H1 (cell line): ENCODE measurements at regions of chr7 and their contacts with region 1.

Region 1: GRCh38 chr7:151244196-151244840 is 4.2 kb downstream of the SMARCD3 start:
- DNase-seq: peak in 1 of 2 experiments; percentile 84
- H3K4me3 ChIP-seq: peak overlapping the region in 1 of 4 experiments; percentile 61; a peak in 4 of 8 replicates
- H3K27ac ChIP-seq: no peak overlapping the region
- H3K4me1 ChIP-seq: peaks cover 0 to 43% (median 29%) of the 10 kb centered on the region in 4 experiments; a peak in 6 of 7 replicates
- H3K27me3 ChIP-seq: peaks cover 16 to 46% (median 39%) of the 10 kb centered on the region in 4 experiments
- CTCF ChIP-seq: peak in 2 of 3 experiments; percentile 80 to 85; a peak in 3 of 4 replicates
- EP300 ChIP-seq: no peak
- POLR2A ChIP-seq: no peak
- RAD21 ChIP-seq: peak; percentile 63 to 79

Region 2: GRCh38 chr7:150992833-150993302 is 251.4 kb before region 1 on chr7:
- CTCF ChIA-PET with region 1: no interaction called
- POLR2A ChIA-PET with region 1: no interaction called
- DNase-seq: peak in 1 of 2 experiments; percentile 78
- H3K4me3 ChIP-seq: no peak overlapping the region
- H3K27ac ChIP-seq: no peak overlapping the region
- H3K4me1 ChIP-seq: peaks cover 4 to 26% (median 20%) of the 10 kb centered on the region in 4 experiments
- H3K27me3 ChIP-seq: no peaks in the 10 kb centered on the region
- CTCF ChIP-seq: no peak
- EP300 ChIP-seq: no peak
- POLR2A ChIP-seq: no peak
- RAD21 ChIP-seq: no peak

Region 3: GRCh38 chr7:151123822-151124464 is 120.4 kb before region 1 on chr7:
- CTCF ChIA-PET with region 1: interaction called, 43 read pairs
- POLR2A ChIA-PET with region 1: no interaction called
- DNase-seq: peak in 1 of 2 experiments; percentile 94
- H3K4me3 ChIP-seq: no peak overlapping the region
- H3K27ac ChIP-seq: no peak overlapping the region
- H3K4me1 ChIP-seq: peaks cover 0 to 23% (median 7%) of the 10 kb centered on the region in 4 experiments; a peak in 6 of 7 replicates
- H3K27me3 ChIP-seq: peaks cover 0 to 13% (median 4%) of the 10 kb centered on the region in 4 experiments; a peak in 5 of 7 replicates
- CTCF ChIP-seq: peak in 2 of 3 experiments; percentile 99 to 100; a peak in 3 of 4 replicates
- EP300 ChIP-seq: no peak
- POLR2A ChIP-seq: no peak
- RAD21 ChIP-seq: peak; percentile 96 to 98

Region 4: GRCh38 chr7:151206914-151207313 is 37.4 kb before region 1 on chr7:
- CTCF ChIA-PET with region 1: interaction called, 15 read pairs
- POLR2A ChIA-PET with region 1: no interaction called
- DNase-seq: no peak
- H3K4me3 ChIP-seq: no peak overlapping the region
- H3K27ac ChIP-seq: no peak overlapping the region
- H3K4me1 ChIP-seq: peaks cover 0 to 6% (median 3%) of the 10 kb centered on the region in 4 experiments; a peak in 4 of 7 replicates
- H3K27me3 ChIP-seq: peaks cover 0 to 3% (median 0%) of the 10 kb centered on the region in 4 experiments; a peak in 2 of 7 replicates
- CTCF ChIP-seq: no peak
- EP300 ChIP-seq: no peak
- POLR2A ChIP-seq: no peak
- RAD21 ChIP-seq: no peak

Region 5: DNA sequence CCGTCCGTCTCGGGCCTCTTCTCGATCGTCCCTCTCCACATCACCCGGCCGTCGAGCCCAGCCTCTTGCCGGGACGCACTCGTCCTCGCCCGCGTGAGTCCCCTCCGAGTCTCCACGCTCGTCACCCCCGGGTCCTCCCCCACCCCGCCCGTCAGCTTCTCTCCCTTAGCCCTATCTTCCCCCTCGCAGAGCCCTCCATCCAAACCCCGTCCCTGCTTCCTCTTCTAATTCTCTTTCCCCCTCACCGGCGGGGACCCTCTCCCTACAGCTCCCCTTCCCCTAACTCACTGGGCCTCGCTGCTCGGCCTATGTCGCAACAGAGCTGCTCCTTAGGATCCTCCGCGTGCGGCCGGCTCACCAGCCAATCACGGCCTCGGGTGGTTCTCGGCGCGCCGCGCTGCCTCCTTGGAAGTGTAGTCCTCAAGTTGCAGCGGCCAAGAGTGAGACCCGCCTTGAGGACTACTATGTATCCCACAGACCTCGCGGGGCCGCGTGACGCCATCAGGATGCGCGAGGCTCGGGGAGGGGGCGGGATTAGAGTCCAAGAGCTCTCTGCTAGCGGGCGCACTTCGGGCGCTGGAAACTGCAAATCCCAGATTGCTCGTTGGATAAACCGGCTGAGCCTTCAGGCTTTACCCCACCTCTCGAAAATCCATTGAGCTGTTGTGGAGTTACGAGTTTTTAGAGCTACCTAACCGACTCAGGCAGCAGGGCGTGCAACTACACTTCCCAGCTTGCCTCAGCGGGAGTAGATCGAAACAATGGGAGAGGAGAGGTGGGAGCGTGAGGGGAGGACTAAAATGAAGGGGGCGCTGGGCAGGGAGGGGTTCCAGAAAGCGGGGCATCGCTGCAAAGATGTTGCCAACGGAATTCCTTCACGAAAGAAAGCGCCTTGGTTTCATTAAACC is 17.2 kb before region 1 on chr7 and contains the start of gene ABCF2:
- CTCF ChIA-PET with region 1: interaction called, 71 read pairs
- POLR2A ChIA-PET with region 1: interaction called, 16 read pairs
- DNase-seq: peak; percentile 95 to 99
- H3K4me3 ChIP-seq: peak within 1 kb of the TSS; percentile 83 to 95 (median 90)
- H3K27ac ChIP-seq: peak within 1 kb of the TSS; percentile 56; the same call in 1 of the 2 replicates
- H3K4me1 ChIP-seq: peaks cover 2 to 9% (median 7%) of the 10 kb centered on the region in 4 experiments; a peak in 5 of 7 replicates
- H3K27me3 ChIP-seq: no peaks in the 10 kb centered on the region
- CTCF ChIP-seq: no peak
- EP300 ChIP-seq: no peak
- POLR2A ChIP-seq: peak; percentile 56 to 76; a peak in 2 of 3 replicates
- RAD21 ChIP-seq: no peak
- total RNA-seq, gene ABCF2: 51.0 and 55.0 TPM in 2 replicates

Region 6: DNA sequence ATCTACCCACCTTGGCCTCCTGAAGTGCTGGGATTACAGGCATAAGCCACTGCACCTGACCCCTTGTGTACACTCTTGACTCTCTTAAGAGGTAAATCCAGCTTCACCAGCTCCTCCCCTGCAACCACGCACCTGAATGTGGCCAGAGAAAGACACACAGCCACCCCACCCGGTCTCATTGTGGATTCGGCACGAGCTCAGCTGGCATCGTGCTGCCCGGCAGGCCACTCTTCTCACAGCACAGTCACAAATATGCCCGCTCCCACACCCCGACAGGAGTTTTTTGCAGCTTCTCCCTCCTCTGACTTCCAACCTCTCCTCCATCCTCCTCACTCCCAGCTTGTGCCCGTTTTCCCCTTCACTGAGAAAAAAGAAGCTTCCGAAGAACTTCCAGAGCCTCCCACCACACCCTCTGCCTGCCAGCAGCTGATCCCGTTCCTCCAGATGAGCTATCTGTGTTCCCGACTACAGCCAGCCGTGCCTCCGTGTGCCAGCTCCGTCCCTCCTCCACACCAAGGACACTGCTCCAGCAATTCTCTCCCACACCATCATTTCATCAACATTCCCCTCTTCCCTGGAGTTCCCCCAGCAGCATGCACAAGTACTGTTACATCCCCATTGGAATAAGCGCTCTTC is 12.2 kb after region 1 on chr7:
- CTCF ChIA-PET with region 1: interaction called, 25 read pairs
- POLR2A ChIA-PET with region 1: interaction called, 22 read pairs
- DNase-seq: no peak
- H3K4me3 ChIP-seq: no peak overlapping the region
- H3K27ac ChIP-seq: no peak overlapping the region
- H3K4me1 ChIP-seq: peaks cover 0 to 15% (median 10%) of the 10 kb centered on the region in 4 experiments; a peak in 6 of 7 replicates
- H3K27me3 ChIP-seq: peaks cover 0 to 14% (median 8%) of the 10 kb centered on the region in 4 experiments; a peak in 4 of 7 replicates
- CTCF ChIP-seq: no peak
- EP300 ChIP-seq: no peak
- POLR2A ChIP-seq: no peak
- RAD21 ChIP-seq: no peak

Region 7: DNA sequence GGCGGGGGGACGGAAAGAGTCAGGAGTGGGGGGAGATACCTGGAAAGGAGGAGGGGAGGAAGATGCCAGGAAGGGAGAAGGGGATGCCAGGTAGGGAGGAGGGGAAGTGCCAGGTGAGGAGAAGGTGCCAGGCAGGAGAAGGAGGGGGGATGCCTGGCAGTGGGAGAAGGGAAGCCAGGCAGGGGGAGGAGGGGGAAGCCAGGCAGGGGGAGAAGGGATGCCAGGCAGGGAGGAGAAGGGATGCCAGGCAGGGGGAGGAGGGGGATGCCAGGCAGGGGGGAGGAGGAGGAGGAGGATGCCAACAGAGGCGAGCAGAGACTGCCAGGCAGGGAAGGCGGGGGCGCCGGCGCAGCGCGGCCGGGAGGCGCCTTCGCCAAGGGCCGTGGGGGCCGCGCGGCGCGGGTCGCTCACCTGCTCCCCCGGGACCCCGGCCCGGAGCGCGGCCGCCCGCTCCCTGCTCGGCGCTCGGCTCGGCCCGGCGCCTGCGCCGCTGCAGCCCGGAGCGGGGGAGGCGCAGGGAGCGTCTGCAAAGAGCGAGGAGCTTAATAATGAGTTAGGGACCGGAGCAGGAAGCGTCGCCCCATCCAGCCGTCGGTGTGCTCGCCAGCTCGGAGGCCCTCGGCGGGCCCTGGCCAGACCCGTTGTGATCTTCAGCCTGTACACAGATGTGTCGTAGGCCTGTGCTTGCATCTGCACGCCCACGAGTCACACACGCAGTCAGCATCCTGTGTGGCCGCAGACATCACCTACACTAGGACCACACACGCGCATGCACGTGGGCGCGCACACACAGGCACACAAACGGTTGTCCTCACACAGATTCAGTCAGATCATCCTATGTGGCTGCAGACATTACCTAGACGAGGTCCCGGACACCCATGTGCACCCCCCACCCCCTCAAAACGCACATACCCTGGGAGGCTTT is 32.6 kb after region 1 on chr7:
- CTCF ChIA-PET with region 1: interaction called, 18 read pairs
- POLR2A ChIA-PET with region 1: interaction called, 3 read pairs
- DNase-seq: peak; percentile 23 to 74
- H3K4me3 ChIP-seq: peak overlapping the region; percentile 23 to 63 (median 42); a peak in 7 of 8 replicates
- H3K27ac ChIP-seq: no peak overlapping the region
- H3K4me1 ChIP-seq: peaks cover 0 to 15% (median 10%) of the 10 kb centered on the region in 4 experiments; a peak in 6 of 7 replicates
- H3K27me3 ChIP-seq: peaks cover 0 to 25% (median 19%) of the 10 kb centered on the region in 4 experiments; a peak in 6 of 7 replicates
- CTCF ChIP-seq: no peak
- EP300 ChIP-seq: no peak
- POLR2A ChIP-seq: no peak
- RAD21 ChIP-seq: no peak

Region 8: DNA sequence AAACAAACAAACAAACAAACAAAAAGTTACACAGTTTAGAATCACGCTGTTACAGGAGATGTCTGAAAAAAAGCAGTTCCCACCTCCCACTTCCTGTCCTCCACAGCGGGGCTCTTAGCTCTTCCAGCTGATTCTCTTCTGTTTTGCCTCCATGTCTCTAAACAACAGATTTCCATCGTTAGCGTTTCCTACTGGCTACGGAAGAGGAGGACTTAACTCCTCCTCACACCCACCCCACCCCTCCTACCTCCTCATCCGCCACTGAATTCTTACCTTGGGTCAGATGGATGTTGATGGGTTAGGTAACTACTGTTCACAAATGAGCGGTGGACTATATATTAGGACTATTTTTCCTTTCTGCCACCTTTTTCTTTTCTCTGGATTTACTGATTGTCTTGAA is 60.5 kb after region 1 on chr7:
- CTCF ChIA-PET with region 1: interaction called, 25 read pairs
- POLR2A ChIA-PET with region 1: interaction called, 6 read pairs
- DNase-seq: peak; percentile 15 to 43
- H3K4me3 ChIP-seq: peak overlapping the region; percentile 43 to 55 (median 50); a peak in 7 of 8 replicates
- H3K27ac ChIP-seq: no peak overlapping the region
- H3K4me1 ChIP-seq: peaks cover 0 to 3% (median 2%) of the 10 kb centered on the region in 4 experiments; a peak in 4 of 7 replicates
- H3K27me3 ChIP-seq: peaks cover 0 to 6% (median 2%) of the 10 kb centered on the region in 4 experiments; a peak in 4 of 7 replicates
- CTCF ChIP-seq: no peak
- EP300 ChIP-seq: no peak
- POLR2A ChIP-seq: 0 out of 3 replicates have a peak, but pooled peaks of 1 of the 2 experiments have one; percentile 36
- RAD21 ChIP-seq: no peak

Region 9: DNA sequence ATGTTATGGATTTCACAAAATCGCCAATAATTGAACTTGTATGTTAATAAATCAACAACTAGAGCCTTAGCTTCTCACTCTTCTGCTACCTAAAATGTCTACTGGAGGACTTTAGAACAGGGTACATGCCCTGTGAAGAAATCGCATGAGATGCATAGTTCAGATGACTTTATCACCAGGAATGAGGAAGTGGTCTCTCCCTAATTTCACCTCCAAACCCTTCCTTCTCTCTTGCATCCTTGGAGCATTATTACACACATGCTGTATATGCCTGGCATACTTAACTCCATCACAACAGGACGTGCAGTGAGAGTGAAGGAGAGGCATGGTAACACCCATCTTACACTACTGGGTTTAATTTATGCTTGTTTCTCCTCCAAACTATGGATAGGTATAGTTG is 247.5 kb after region 1 on chr7:
- CTCF ChIA-PET with region 1: no interaction called
- POLR2A ChIA-PET with region 1: no interaction called
- DNase-seq: no peak
- H3K4me3 ChIP-seq: no peak overlapping the region
- H3K27ac ChIP-seq: no peak overlapping the region
- H3K4me1 ChIP-seq: peaks cover 4 to 10% (median 7%) of the 10 kb centered on the region in 4 experiments; a peak in 6 of 7 replicates
- H3K27me3 ChIP-seq: no peaks in the 10 kb centered on the region
- CTCF ChIP-seq: no peak
- EP300 ChIP-seq: no peak
- POLR2A ChIP-seq: no peak
- RAD21 ChIP-seq: no peak